ENCODE measurements at regions of chr5 and their contacts with region 1.

Region 1: DNA sequence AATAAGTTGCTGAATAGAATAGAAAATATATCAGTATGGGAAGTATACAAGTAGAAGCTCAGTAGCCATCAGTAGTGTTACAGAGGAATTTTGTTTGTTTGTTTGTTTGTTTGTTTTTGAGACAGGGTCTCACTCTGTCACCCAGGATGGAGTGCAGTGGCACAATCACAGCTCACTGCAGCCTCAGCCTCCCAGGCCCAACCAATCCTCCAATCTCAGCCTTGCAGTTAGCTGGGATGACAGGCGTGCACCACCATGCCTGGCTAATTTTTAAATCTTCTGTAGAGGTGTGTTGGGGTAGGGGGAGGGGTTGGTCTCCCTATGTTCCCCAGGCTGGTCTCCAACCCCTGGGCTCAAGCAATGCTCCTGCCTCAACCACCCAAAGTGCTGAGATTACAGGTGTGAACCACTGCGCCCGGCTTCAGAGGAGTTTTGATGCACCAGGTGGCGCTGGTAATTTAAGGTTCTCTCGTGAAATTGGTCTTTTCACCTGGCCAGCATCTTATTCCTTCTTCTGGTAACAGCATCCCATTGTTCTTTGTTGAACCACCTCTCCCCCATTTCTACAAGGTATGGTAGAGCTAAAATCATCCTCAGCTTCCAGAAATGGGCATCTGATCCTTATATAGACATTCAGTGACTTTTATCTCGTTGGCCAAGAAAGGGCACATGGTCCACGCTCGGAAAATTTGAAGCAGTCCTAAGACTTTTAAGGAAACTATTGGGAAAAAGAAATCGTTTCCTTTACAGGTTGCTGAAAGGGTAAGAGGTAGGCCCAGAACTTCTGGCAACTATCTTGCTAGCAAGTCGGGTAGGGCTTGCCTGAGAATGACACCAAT is 157.1 kb downstream of the ARRDC3 start:
- DNase-seq: peak; percentile 79
- ATAC-seq: peak; percentile 75
- H3K4me3 Mint-ChIP-seq: no peak overlapping the region
- H3K27ac Mint-ChIP-seq: no peak overlapping the region
- H3K4me1 Mint-ChIP-seq: no peaks in the 10 kb centered on the region
- H3K27me3 Mint-ChIP-seq: peaks cover 7% of the 10 kb centered on the region

Region 2: GRCh38 chr5:90866333-90866732 is 359.7 kb before region 1 on chr5:
- CTCF ChIA-PET with region 1: no interaction called
- POLR2A ChIA-PET with region 1: no interaction called
- intact Hi-C with region 1: loop called (anchors 5 kb)
- DNase-seq: no peak
- ATAC-seq: no peak
- H3K4me3 Mint-ChIP-seq: no peak overlapping the region
- H3K27ac Mint-ChIP-seq: no peak overlapping the region
- H3K4me1 Mint-ChIP-seq: peaks cover 7% of the 10 kb centered on the region
- H3K27me3 Mint-ChIP-seq: peaks cover 15% of the 10 kb centered on the region

Region 3: DNA sequence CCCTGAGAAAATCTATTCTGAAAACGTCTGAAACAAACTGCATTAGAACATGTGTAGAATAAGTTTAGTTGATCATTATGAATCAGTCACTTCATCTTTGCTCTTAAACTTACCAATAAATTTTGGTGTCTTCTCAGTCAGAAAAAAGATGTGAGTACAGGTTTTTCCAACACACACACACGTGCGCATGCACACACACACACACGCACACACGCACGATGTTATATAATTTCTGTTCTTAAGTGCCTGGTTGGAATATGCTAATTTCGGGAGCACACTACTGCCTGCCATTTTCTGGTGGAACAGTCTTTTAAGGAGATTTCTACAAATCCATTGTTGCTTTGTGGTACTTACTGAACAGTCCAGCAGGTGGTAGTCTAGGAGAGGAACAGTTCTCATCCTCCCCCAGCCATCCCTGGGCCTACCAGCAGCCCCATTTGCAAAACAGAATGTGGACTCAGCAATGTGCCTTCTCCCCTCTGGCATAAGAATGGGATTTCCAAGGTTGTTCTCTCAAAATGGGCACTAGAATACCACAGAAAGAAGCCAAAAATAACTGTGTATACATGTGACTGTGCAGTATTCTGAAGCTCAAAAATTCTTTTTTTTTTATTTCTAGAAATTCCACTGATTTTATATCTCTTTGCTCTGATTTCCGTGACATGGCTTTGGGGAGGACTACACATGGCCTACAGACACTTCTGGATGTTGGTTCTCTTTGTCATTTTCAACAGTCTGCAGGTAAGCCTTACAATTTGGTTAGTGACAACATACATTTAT is 124.3 kb before region 1 on chr5:
- CTCF ChIA-PET with region 1: interaction called, 5 read pairs
- POLR2A ChIA-PET with region 1: no interaction called
- intact Hi-C with region 1: loop called in 1 of 2 experiments (anchors 1 kb)
- DNase-seq: peak; percentile 76
- ATAC-seq: peak; percentile 89
- H3K4me3 Mint-ChIP-seq: no peak overlapping the region
- H3K27ac Mint-ChIP-seq: no peak overlapping the region
- H3K4me1 Mint-ChIP-seq: no peaks in the 10 kb centered on the region
- H3K27me3 Mint-ChIP-seq: peaks cover 13% of the 10 kb centered on the region

Region 4: GRCh38 chr5:91280362-91281269 is 54.5 kb after region 1 on chr5:
- CTCF ChIA-PET with region 1: interaction called, 4 read pairs
- POLR2A ChIA-PET with region 1: no interaction called
- intact Hi-C with region 1: loop called in 1 of 2 experiments (anchors 2 kb)
- DNase-seq: peak; percentile 97
- ATAC-seq: peak; percentile 80
- H3K4me3 Mint-ChIP-seq: peak overlapping the region; percentile 76
- H3K27ac Mint-ChIP-seq: peak overlapping the region; percentile 99
- H3K4me1 Mint-ChIP-seq: peaks cover 53% of the 10 kb centered on the region
- H3K27me3 Mint-ChIP-seq: no peaks in the 10 kb centered on the region

Measured in activated CD4-positive, alpha-beta T cell treated with anti-CD3 and anti-CD28 coated beads for 36 hours (primary cell).